HepG2 (cell line): ENCODE measurements at regions of chr12 and their contacts with region 1.

Region 1: GRCh38 chr12:54439521-54440255 is 20.6 kb upstream of the ITGA5 start:
- DNase-seq: peak; percentile 18
- ATAC-seq: peak; percentile 82
- H3K4me3 ChIP-seq: no peak overlapping the region
- H3K27ac ChIP-seq: no peak overlapping the region
- H3K4me1 ChIP-seq: peaks cover 6% of the 10 kb centered on the region; the same call in 1 of the 2 replicates
- H3K27me3 ChIP-seq: no peaks in the 10 kb centered on the region
- CTCF ChIP-seq: peak; percentile 72
- EP300 ChIP-seq: no peak
- POLR2A ChIP-seq: no peak
- RAD21 ChIP-seq: peak; percentile 28; the same call in 1 of the 2 replicates

Region 2: GRCh38 chr12:54398995-54399793 is 40.5 kb before region 1 on chr12:
- CTCF ChIA-PET with region 1: interaction called, 18 read pairs
- POLR2A ChIA-PET with region 1: no interaction called
- in situ Hi-C with region 1: loop called (anchors 5 kb)
- intact Hi-C with region 1: loop called (anchors 1 kb)
- DNase-seq: peak; percentile 62
- ATAC-seq: peak; percentile 93
- H3K4me3 ChIP-seq: no peak overlapping the region
- H3K27ac ChIP-seq: no peak overlapping the region
- H3K4me1 ChIP-seq: no peaks in the 10 kb centered on the region
- H3K27me3 ChIP-seq: no peaks in the 10 kb centered on the region; a peak in 1 of 5 replicates
- CTCF ChIP-seq: peak; percentile 97
- EP300 ChIP-seq: no peak
- POLR2A ChIP-seq: no peak
- RAD21 ChIP-seq: peak; percentile 69

Region 3: GRCh38 chr12:54404061-54405004 is 35.4 kb before region 1 on chr12:
- CTCF ChIA-PET with region 1: interaction called, 18 read pairs
- POLR2A ChIA-PET with region 1: no interaction called
- in situ Hi-C with region 1: loop called (anchors 5 kb)
- intact Hi-C with region 1: loop called (anchors 1 kb)
- DNase-seq: peak; percentile 40
- ATAC-seq: peak; percentile 69
- H3K4me3 ChIP-seq: no peak overlapping the region
- H3K27ac ChIP-seq: no peak overlapping the region
- H3K4me1 ChIP-seq: no peaks in the 10 kb centered on the region
- H3K27me3 ChIP-seq: peaks cover 0 to 3% of the 10 kb centered on the region in 2 experiments; a peak in 2 of 5 replicates
- CTCF ChIP-seq: peak; percentile 67
- EP300 ChIP-seq: no peak
- POLR2A ChIP-seq: no peak
- RAD21 ChIP-seq: no peak

Region 4: DNA sequence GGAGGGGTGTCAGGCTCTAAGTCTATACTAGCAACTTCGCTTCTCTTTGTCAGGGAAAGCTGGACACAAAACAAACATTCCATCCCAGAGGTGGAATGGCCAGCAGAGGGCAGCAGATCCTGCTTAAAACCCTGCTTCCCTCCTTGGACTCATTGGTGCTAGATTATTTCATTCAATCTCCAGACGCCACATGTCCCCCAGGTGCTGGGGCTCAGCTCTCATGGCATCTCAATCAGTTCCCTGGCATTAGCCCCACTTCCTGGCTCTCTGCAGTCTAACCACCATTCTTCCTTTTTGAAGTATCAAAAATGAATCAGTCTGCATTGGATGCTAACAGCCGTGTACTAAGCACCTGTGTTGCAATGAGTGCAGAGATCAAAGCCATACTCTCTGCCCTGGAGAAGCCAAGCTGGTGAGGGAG is 156.8 kb after region 1 on chr12:
- CTCF ChIA-PET with region 1: no interaction called
- POLR2A ChIA-PET with region 1: no interaction called
- in situ Hi-C with region 1: no loop called
- intact Hi-C with region 1: no loop called
- DNase-seq: peak; percentile 40
- ATAC-seq: peak; percentile 88
- H3K4me3 ChIP-seq: no peak overlapping the region
- H3K27ac ChIP-seq: no peak overlapping the region
- H3K4me1 ChIP-seq: no peaks in the 10 kb centered on the region
- H3K27me3 ChIP-seq: peaks cover 0 to 35% of the 10 kb centered on the region in 2 experiments; a peak in 3 of 5 replicates
- CTCF ChIP-seq: peak; percentile 73
- EP300 ChIP-seq: no peak
- POLR2A ChIP-seq: no peak
- RAD21 ChIP-seq: no peak